Left colon (tissue), 2 donors: ENCODE measurements at regions of chr20 and their contacts with region 1.

Region 1: GRCh38 chr20:40689943-40690835 is 1.2 kb upstream of the MAFB start:
- DNase-seq: peak; percentile 79 to 89
- ATAC-seq: peak; percentile 67

Region 2: DNA sequence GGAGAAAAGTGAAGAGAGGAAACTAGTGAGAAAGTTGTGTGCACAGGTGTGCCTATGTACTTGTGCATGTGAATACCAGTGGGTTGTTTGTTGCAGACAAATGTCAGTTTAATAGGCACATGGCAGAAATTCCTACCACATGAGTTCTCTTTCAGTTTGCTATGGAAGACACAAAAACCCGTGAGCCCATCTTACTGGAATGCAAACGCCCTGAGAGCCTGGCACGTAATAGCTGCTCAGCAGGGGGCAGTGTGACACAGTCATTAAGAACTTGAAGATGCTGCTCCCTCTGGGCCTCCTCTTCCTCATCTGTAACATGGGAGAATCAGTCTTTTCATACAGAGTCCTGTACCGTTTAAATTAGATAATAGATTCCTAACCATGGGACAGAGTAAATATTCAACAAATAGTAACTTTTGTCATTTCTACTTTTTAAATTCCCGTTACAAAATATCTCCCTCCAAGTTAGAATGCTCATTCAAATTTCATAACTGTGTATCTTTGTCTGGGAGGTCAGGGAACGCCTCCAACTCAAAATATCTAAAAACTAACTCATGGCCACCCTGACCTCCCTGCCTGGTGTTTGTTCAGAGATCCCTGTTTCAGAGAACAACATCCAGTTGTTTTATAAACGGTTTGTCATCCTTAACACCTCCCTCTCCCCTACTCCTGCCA is 804.1 kb before region 1 on chr20:
- intact Hi-C with region 1: loop called in 1 of 2 experiments (anchors 5 kb)
- DNase-seq: peak; percentile 34 to 64
- ATAC-seq: peak; percentile 43

Region 3: GRCh38 chr20:40265825-40266533 is 424.2 kb before region 1 on chr20:
- intact Hi-C with region 1: loop called in 1 of 2 experiments (anchors 10 kb)
- DNase-seq: peak in 1 of 2 donors; percentile 35
- ATAC-seq: peak; percentile 79